AG04450 (cell line): ENCODE measurements at regions of chr7 and their contacts with region 1.

Region 1: GRCh38 chr7:150898475-150899011 is 46.2 kb downstream of the AOC1 start:
- DNase-seq: peak; percentile 29
- H3K4me3 ChIP-seq: no peak overlapping the region
- H3K27ac ChIP-seq: no peak overlapping the region
- H3K27me3 ChIP-seq: peaks cover 14% of the 10 kb centered on the region
- CTCF ChIP-seq: peak; percentile 90

Region 2: GRCh38 chr7:150909200-150909995 is 10.9 kb after region 1 on chr7:
- CTCF ChIA-PET with region 1: interaction called, 18 read pairs
- POLR2A ChIA-PET with region 1: no interaction called
- DNase-seq: no peak
- H3K4me3 ChIP-seq: no peak overlapping the region
- H3K27ac ChIP-seq: no peak overlapping the region
- H3K27me3 ChIP-seq: no peaks in the 10 kb centered on the region
- CTCF ChIP-seq: no peak

Region 3: DNA sequence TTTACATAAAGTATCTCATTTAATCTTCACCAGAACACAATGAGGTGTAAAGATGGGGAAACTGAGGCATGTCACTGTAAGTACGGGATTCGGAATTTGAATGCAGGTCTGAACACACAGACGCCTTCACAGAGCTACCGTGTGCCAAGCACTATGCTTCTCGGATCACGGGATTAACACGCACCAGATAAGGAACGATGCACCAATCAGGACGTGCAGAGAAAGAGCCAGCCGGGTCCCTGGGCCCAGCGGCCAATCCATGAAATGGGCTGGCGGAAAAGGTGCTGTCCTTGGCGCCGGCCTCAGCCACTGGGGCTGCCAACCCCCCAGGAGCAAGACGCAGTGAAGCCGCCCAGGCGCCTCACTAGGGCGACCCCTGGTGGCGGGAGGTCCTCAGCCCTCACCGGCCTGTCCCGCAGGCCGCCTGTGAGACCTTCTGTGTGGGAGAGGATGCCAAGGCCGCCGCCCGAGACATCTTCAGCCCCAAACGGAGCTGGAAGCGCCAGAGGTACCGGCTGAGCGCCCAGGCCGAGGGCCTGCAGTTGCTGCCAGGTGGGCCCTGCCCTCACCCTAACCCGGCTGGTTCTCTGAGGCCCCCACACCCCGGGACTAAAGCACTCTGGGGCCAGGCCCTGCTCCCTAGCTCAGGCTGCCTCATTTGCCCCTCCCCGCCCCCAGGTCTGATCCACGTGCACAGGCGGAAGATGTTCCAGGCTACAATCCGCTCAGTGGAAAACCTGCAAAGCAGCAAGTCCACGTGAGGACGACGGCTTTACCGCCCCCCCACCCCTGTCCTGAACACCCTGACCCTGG is 110.2 kb after region 1 on chr7:
- CTCF ChIA-PET with region 1: interaction called, 11 read pairs
- POLR2A ChIA-PET with region 1: no interaction called
- DNase-seq: no peak
- H3K4me3 ChIP-seq: peak overlapping the region; percentile 5; the same call in 1 of the 2 replicates
- H3K27ac ChIP-seq: no peak overlapping the region
- H3K27me3 ChIP-seq: peaks cover 8% of the 10 kb centered on the region
- CTCF ChIP-seq: peak; percentile 58

Region 4: GRCh38 chr7:151276666-151277590 is 378.4 kb after region 1 on chr7:
- CTCF ChIA-PET with region 1: no interaction called
- POLR2A ChIA-PET with region 1: no interaction called
- DNase-seq: peak; percentile 15
- H3K4me3 ChIP-seq: peak overlapping the region; percentile 61
- H3K27ac ChIP-seq: no peak overlapping the region
- H3K27me3 ChIP-seq: peaks cover 24% of the 10 kb centered on the region
- CTCF ChIP-seq: no peak